ENCODE measurements at regions of chr1 and their contacts with region 1.

Region 1: DNA sequence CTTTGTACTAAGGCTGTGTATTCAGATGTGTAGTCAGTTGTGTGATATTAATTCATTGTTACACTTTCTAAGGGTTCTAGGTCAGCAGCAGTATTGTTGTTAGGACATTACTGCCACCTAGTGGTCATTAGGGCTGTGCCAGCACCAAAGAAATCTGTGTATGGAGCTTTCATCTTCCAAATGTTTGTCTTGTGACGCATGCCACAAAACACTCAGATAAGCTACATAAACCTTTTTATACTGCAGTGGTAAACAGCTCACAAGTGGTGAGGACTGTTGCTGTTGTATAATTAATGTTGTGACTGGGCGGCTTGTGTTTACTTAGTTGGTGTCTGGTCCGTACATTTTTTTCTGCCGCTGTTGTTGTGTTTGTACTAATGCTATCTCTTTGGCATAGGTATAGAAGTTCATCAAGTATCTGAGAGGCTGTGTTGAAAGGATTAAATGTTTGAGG is 51.7 kb downstream of the S1PR1 start:
- DNase-seq: peak; percentile 84
- H3K4me3 Mint-ChIP-seq: no peak overlapping the region
- H3K27ac Mint-ChIP-seq: peak overlapping the region; percentile 72
- H3K4me1 Mint-ChIP-seq: peaks cover 84% of the 10 kb centered on the region
- H3K27me3 Mint-ChIP-seq: no peaks in the 10 kb centered on the region

Region 2: GRCh38 chr1:100459358-100460114 is 829.0 kb before region 1 on chr1:
- CTCF ChIA-PET with region 1: interaction called, 4 read pairs
- intact Hi-C with region 1: loop called (anchors 2 kb)
- DNase-seq: peak; percentile 86
- H3K4me3 Mint-ChIP-seq: no peak overlapping the region
- H3K27ac Mint-ChIP-seq: peak overlapping the region; percentile 43
- H3K4me1 Mint-ChIP-seq: peaks cover 46% of the 10 kb centered on the region
- H3K27me3 Mint-ChIP-seq: no peaks in the 10 kb centered on the region

Region 3: GRCh38 chr1:100928128-100928527 is 360.4 kb before region 1 on chr1:
- CTCF ChIA-PET with region 1: interaction called, 38 read pairs
- intact Hi-C with region 1: loop called (anchors 1 kb)
- DNase-seq: peak; percentile 49
- H3K4me3 Mint-ChIP-seq: no peak overlapping the region
- H3K27ac Mint-ChIP-seq: no peak overlapping the region
- H3K4me1 Mint-ChIP-seq: peaks cover 30% of the 10 kb centered on the region
- H3K27me3 Mint-ChIP-seq: no peaks in the 10 kb centered on the region

Region 4: GRCh38 chr1:101051688-101052638 is 236.6 kb before region 1 on chr1:
- CTCF ChIA-PET with region 1: interaction called, 5 read pairs
- intact Hi-C with region 1: loop called (anchors 2 kb)
- DNase-seq: peak; percentile 64
- H3K4me3 Mint-ChIP-seq: no peak overlapping the region
- H3K27ac Mint-ChIP-seq: peak overlapping the region; percentile 48
- H3K4me1 Mint-ChIP-seq: peaks cover 17% of the 10 kb centered on the region
- H3K27me3 Mint-ChIP-seq: no peaks in the 10 kb centered on the region

Region 5: GRCh38 chr1:101198842-101199636 is 89.5 kb before region 1 on chr1:
- CTCF ChIA-PET with region 1: interaction called, 7 read pairs
- intact Hi-C with region 1: loop called (anchors 1 kb)
- DNase-seq: peak; percentile 82
- H3K4me3 Mint-ChIP-seq: no peak overlapping the region
- H3K27ac Mint-ChIP-seq: peak overlapping the region; percentile 79
- H3K4me1 Mint-ChIP-seq: peaks cover 28% of the 10 kb centered on the region
- H3K27me3 Mint-ChIP-seq: no peaks in the 10 kb centered on the region

Region 6: GRCh38 chr1:101298663-101299062 is 10.1 kb after region 1 on chr1:
- CTCF ChIA-PET with region 1: interaction called, 21 read pairs
- intact Hi-C with region 1: no loop called
- DNase-seq: no peak
- H3K4me3 Mint-ChIP-seq: no peak overlapping the region
- H3K27ac Mint-ChIP-seq: no peak overlapping the region
- H3K4me1 Mint-ChIP-seq: peaks cover 30% of the 10 kb centered on the region
- H3K27me3 Mint-ChIP-seq: no peaks in the 10 kb centered on the region